Natural killer cell (primary cell): ENCODE measurements at regions of chr1 and their contacts with region 1.

Region 1: DNA sequence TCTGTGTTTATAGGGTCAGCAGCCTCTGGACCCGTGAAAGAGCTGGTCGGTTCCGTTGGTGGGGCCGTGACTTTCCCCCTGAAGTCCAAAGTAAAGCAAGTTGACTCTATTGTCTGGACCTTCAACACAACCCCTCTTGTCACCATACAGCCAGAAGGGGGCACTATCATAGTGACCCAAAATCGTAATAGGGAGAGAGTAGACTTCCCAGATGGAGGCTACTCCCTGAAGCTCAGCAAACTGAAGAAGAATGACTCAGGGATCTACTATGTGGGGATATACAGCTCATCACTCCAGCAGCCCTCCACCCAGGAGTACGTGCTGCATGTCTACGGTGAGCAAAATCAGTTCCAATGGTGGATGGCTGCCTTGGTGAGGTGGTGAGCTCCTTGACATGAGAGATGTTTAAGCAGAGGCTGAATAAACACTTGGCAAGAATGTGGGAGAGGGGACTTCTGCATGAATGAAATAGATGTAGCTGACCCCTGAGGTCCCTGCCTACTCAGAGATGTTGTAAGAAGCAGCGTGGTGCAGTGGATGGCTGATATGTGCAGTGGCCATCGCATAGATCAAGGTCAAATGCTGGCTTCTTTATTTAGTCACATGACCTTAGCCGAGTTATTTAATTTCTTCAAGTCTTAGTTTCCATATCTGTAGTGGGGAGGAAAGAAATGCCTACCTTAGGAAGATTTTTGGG is 9.3 kb downstream of the SLAMF7 start:
- DNase-seq: peak in 1 of 2 donors; percentile 34
- ATAC-seq: no peak
- H3K4me3 ChIP-seq: no peak overlapping the region
- H3K4me3 Mint-ChIP-seq: peak overlapping the region; percentile 68
- H3K27ac ChIP-seq: peak overlapping the region; percentile 23
- H3K27ac Mint-ChIP-seq: peak overlapping the region; percentile 88 to 96
- H3K4me1 ChIP-seq: peaks cover 66% of the 10 kb centered on the region
- H3K4me1 Mint-ChIP-seq: peaks cover 98 to 99% of the 10 kb centered on the region in 2 donors
- H3K27me3 ChIP-seq: no peaks in the 10 kb centered on the region
- H3K27me3 Mint-ChIP-seq: no peaks in the 10 kb centered on the region
- CTCF ChIP-seq: no peak

Region 2: DNA sequence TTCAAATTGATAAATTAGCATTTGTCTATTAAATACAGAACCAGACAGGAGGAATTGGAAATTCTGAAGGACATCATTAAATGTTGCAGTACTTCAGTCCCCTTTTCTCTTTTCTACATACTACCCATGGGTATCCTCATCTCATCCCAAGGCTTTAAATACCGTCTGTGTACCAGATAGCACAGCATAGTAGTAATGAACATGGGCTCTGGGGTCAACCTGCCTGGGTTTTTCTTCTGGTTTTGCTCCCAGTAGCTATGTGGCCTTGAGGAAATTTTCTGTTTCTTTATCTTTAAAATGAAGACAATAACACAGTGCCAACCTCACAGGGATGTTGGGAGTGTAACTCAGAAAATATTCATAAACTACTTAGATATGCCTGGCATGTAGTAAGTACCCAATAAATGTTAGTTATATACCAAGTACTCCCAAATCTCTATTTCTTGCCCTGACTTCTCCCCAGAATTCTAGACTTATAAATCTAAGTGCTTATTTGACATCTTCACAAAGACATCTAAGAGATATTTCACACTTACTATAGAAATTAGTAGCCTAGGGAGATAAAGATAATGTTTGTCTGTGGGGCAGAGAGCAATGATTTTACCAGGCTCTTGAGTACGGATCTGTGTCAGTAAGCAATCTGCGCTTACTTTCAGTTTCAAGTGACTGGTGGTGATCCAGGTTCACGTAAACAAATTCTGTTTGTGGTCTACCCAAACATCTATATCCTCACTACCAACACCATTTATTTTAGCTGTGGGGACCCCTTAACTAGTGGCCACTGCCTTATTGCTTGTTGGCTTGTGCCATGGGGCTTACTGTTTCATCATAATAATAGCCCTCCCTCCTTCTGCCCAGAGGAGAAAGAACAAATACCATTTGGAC is 310.7 kb before region 1 on chr1:
- intact Hi-C with region 1: loop called (anchors 10 kb)
- DNase-seq: peak in 1 of 2 donors; percentile 78
- ATAC-seq: peak; percentile 87 to 95 (median 92)
- H3K4me3 ChIP-seq: peak overlapping the region; percentile 8
- H3K4me3 Mint-ChIP-seq: peak overlapping the region; percentile 71
- H3K27ac ChIP-seq: peak overlapping the region; percentile 92
- H3K27ac Mint-ChIP-seq: peak overlapping the region; percentile 93 to 99
- H3K4me1 ChIP-seq: peaks cover 17% of the 10 kb centered on the region
- H3K4me1 Mint-ChIP-seq: peaks cover 44 to 50% of the 10 kb centered on the region in 2 donors
- H3K27me3 ChIP-seq: no peaks in the 10 kb centered on the region
- H3K27me3 Mint-ChIP-seq: no peaks in the 10 kb centered on the region
- CTCF ChIP-seq: no peak

Region 3: DNA sequence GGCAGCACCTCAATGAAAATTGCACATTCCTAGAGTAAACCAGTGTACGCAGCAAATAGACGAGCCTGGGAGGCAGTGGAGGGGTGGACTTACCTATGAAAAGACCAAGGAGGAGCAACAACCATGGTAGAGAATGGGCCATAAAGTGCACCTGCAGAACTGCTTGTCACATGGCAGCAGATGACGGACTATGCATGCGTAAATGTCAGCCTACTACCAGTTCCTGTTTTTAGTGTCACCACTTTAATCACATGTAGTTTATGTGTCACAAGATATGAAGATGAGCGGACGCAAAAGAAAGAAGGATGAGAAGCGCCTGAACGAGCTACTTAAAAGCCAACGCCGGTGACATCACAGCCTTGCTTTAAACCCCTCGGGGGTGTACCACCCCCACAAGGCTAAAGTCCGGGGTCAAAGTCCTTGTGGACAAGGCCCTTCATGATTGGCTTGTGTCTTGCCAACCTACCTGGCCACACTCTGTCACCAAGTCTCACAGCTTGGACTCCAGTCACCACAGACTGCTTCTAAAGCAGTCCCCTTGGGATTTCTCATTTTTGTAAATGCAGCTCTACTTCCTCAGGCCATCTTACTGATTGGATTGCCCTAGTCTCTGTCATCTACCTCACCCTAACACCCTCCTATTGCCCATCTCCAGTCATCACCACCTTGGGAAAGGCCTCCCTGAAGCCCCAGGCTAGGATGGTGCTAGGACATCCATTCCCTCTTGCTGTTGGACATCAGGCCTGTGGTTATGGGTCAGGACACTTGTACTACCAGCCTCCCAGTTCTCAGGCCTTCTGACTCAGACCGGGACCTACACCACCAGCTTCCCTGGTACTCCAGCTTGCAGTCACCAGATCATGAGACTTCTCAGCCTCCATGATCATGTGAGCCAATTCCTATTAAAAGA is 41.6 kb after region 1 on chr1:
- intact Hi-C with region 1: no loop called
- DNase-seq: no peak
- ATAC-seq: peak in 2 of 3 donors; percentile 35 to 39
- H3K4me3 ChIP-seq: no peak overlapping the region
- H3K4me3 Mint-ChIP-seq: no peak overlapping the region
- H3K27ac ChIP-seq: peak overlapping the region; percentile 96
- H3K27ac Mint-ChIP-seq: no peak overlapping the region
- H3K4me1 ChIP-seq: peaks cover 9% of the 10 kb centered on the region
- H3K4me1 Mint-ChIP-seq: peaks cover 0 to 11% of the 10 kb centered on the region in 2 donors
- H3K27me3 ChIP-seq: no peaks in the 10 kb centered on the region
- H3K27me3 Mint-ChIP-seq: no peaks in the 10 kb centered on the region
- CTCF ChIP-seq: no peak

Region 4: GRCh38 chr1:160800645-160801408 is 52.5 kb after region 1 on chr1:
- intact Hi-C with region 1: no loop called
- DNase-seq: peak in 1 of 2 donors; percentile 72
- ATAC-seq: peak in 1 of 3 donors; percentile 57
- H3K4me3 ChIP-seq: peak overlapping the region; percentile 11
- H3K4me3 Mint-ChIP-seq: peak overlapping the region; percentile 74
- H3K27ac ChIP-seq: peak overlapping the region; percentile 25
- H3K27ac Mint-ChIP-seq: peak overlapping the region; percentile 76 to 91
- H3K4me1 ChIP-seq: peaks cover 49% of the 10 kb centered on the region
- H3K4me1 Mint-ChIP-seq: peaks cover 69 to 72% of the 10 kb centered on the region in 2 donors
- H3K27me3 ChIP-seq: no peaks in the 10 kb centered on the region
- H3K27me3 Mint-ChIP-seq: no peaks in the 10 kb centered on the region
- CTCF ChIP-seq: no peak